ENCODE measurements at regions of chr5 and their contacts with region 1.

Region 1: GRCh38 chr5:180071531-180072255 is at the start of gene RNF130:
- DNase-seq: peak; percentile 84
- ATAC-seq: peak; percentile 65
- H3K4me3 ChIP-seq: peak within 1 kb of the TSS; percentile 77
- H3K27ac ChIP-seq: peak within 1 kb of the TSS; percentile 47; the same call in 1 of the 2 replicates
- H3K4me1 ChIP-seq: peaks cover 30% of the 10 kb centered on the region
- H3K27me3 ChIP-seq: no peaks in the 10 kb centered on the region
- CTCF ChIP-seq: no peak
- total RNA-seq, gene RNF130: 31.2 and 35.4 TPM in 2 replicates

Region 2: DNA sequence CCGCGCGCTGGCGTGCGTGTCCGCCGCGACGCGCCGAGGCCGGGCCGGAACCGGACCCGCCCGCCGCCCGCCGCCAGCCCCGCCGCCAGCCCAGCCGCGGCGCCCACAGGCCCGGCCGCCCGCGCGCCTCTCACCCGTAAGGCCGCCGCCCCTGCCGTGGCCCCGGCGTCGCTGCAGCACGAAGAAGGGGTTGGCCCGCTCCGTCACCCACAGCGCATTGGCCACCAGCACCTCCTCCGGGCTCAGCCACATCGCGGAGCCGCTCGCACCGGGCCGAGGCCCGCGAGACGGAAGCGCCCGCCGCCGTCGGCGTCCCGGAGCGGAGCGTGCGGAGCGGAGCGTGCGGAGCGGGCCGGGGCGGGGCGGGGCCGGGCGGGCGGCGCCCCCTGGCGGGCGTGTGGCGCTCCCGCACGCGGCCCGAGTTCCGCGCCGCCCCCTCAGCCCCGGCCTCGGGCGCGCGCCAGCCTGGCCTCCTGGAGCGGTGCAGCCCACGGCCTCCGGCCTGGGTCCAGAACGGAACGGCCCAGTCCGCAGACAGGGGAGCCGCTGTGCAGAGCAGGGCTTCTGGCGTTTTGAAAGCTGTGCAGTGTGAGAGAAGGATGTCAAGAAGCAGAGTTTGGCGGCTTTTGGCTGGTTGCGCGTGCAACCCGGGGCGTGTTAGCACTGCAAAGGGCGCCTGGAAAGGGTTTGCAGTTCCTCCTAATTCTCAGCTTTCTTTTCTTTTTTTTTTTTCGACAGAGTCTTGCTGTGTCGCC is 163.9 kb before region 1 on chr5 and contains the start of gene TBC1D9B:
- CTCF ChIA-PET with region 1: no interaction called
- POLR2A ChIA-PET with region 1: no interaction called
- intact Hi-C with region 1: loop called (anchors 2 kb)
- DNase-seq: peak; percentile 60
- ATAC-seq: peak; percentile 88
- H3K4me3 ChIP-seq: peak within 1 kb of the TSS; percentile 87
- H3K27ac ChIP-seq: no peak within 1 kb of the TSS
- H3K4me1 ChIP-seq: peaks cover 13% of the 10 kb centered on the region
- H3K27me3 ChIP-seq: no peaks in the 10 kb centered on the region
- CTCF ChIP-seq: no peak
- total RNA-seq, gene TBC1D9B: 44.9 and 67.7 TPM in 2 replicates

Region 3: DNA sequence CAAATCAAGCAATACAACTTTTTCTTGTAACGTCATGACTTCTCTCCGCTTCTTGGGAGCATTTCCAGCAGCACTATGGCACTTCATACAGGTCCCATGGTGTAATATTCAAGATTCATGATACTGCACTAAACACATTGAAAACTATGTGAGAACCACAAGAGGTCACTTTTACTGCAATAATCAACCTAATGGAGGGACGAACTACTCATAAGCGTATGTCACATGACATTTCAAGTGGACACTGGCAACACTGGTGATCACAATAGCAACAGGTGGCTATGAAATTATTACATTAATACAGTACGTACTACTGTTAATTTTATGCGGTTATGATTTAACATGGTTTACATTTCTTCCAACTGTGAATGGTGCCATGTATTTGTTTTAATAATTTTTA is 85.4 kb before region 1 on chr5:
- CTCF ChIA-PET with region 1: no interaction called
- POLR2A ChIA-PET with region 1: no interaction called
- intact Hi-C with region 1: loop called (anchors 5 kb)
- DNase-seq: peak; percentile 6
- ATAC-seq: peak; percentile 43; the same call in 1 of the 2 replicates
- H3K4me3 ChIP-seq: no peak overlapping the region
- H3K27ac ChIP-seq: no peak overlapping the region
- H3K4me1 ChIP-seq: no peaks in the 10 kb centered on the region
- H3K27me3 ChIP-seq: no peaks in the 10 kb centered on the region
- CTCF ChIP-seq: no peak

Region 4: DNA sequence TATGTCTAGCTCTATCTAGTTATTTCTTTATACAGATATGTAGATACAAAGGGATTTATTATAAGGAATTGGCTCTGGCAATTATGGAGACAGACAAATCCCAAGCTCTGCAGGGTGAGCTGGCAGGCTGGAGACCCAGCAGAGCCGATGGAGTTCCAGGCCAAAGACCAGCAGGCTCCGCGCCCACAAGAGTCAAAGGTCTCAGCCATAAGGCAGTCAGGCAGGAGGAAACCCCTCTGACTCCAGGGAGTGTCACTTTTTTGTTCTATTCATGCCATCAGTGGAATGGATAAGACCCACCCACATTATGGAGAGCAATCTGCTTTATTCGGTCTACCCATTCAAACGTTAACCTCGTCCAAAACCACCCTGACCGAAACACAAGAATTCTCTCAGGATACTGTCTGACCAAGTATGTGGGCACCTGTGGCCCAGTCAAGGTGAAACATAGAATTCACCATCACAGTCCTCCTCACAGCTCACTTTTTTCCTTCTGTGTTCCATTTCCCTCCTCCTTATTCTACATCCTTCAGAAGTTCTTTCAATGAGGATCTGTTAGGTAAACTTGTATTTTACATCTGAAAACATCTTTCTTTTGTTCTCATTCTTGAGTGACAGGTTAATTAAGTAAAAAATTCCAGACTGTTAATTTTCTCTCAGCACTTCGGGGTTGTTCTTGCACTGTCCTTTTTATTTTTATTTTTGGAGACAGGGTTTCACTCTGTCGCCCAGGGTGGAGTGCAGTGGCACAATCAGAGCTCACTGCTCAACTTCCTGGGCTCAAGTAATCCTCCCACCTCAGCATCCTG is 21.4 kb before region 1 on chr5:
- CTCF ChIA-PET with region 1: no interaction called
- POLR2A ChIA-PET with region 1: no interaction called
- intact Hi-C with region 1: no loop called
- DNase-seq: no peak
- ATAC-seq: no peak
- H3K4me3 ChIP-seq: no peak overlapping the region
- H3K27ac ChIP-seq: no peak overlapping the region
- H3K4me1 ChIP-seq: no peaks in the 10 kb centered on the region
- H3K27me3 ChIP-seq: no peaks in the 10 kb centered on the region
- CTCF ChIP-seq: no peak